ENCODE measurements at regions of chr6 and their contacts with region 1.

Region 1: GRCh38 chr6:25278914-25279747 is at the start of gene CARMIL1:
- DNase-seq: no peak
- H3K4me3 ChIP-seq: peak within 1 kb of the TSS; percentile 81 to 88 (median 86)
- H3K27ac ChIP-seq: peak within 1 kb of the TSS; percentile 74 to 90 (median 87)
- H3K4me1 ChIP-seq: peaks cover 5 to 44% (median 8%) of the 10 kb centered on the region in 3 donors
- H3K27me3 ChIP-seq: peaks cover 0 to 4% (median 0%) of the 10 kb centered on the region in 4 donors
- CTCF ChIP-seq: peak; percentile 49 to 78 (median 70)
- POLR2A ChIP-seq: peak in 2 of 4 donors; percentile 30 to 74
- total RNA-seq, gene CARMIL1: 7.2 to 19.7 (median 18.3) TPM

Region 2: GRCh38 chr6:25490018-25490801 is 211.1 kb after region 1 on chr6:
- intact Hi-C with region 1: loop called (anchors 5 kb)
- DNase-seq: no peak
- H3K4me3 ChIP-seq: no peak overlapping the region
- H3K27ac ChIP-seq: no peak overlapping the region
- H3K4me1 ChIP-seq: peaks cover 0 to 8% (median 0%) of the 10 kb centered on the region in 3 donors
- H3K27me3 ChIP-seq: no peaks in the 10 kb centered on the region
- CTCF ChIP-seq: peak; percentile 48 to 90 (median 78)
- POLR2A ChIP-seq: no peak

Region 3: DNA sequence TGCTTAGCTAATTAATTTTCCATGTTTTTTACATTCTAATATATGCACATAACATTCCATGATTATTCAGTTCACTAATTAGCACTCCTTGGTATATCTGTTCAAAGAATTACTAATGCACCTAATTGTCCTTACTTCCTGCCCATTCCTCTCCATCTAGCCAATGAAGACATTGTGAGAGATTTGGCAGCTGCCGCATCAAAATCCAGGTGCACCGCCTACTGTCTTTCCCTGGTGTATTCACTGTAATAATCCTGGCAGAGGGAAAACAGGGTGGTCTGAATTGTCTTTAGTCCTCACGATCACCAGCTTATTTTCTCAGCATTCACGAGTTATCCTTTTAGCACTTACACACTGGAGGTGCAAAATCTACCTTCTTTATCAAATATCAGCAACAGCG is 311.9 kb after region 1 on chr6:
- intact Hi-C with region 1: loop called (anchors 10 kb)
- DNase-seq: no peak
- H3K4me3 ChIP-seq: no peak overlapping the region
- H3K27ac ChIP-seq: no peak overlapping the region
- H3K4me1 ChIP-seq: no peaks in the 10 kb centered on the region
- H3K27me3 ChIP-seq: no peaks in the 10 kb centered on the region
- CTCF ChIP-seq: no peak
- POLR2A ChIP-seq: no peak